ENCODE measurements at regions of chr3 and their contacts with region 1.

Region 1: DNA sequence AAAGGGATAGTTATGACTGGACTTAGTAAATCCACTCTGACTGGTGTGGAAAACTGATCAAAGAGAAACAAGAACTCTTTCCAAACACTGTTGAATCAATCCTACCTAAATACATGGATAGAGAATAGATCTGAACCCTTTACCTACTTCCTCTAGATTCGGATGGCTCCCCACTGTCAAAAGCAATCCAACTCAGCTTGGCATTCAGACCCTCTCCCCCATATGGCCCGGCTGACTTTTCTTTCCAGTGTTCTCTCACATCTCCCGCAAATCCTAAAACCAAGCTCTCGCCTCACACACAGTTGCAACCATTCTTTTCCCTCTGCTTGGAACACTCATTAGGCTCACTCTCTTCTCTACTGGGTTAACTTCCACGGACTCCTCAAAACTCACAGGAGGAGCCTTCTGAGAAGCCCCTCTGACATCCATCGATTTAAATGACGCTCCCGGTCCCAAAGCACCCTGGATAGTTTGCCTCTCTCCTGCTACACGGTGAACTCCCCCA is 639 bp downstream of the SPICE1 start:
- H3K4me3 Mint-ChIP-seq: no peak overlapping the region
- H3K27ac Mint-ChIP-seq: no peak overlapping the region
- H3K4me1 Mint-ChIP-seq: peaks cover 13% of the 10 kb centered on the region
- H3K27me3 Mint-ChIP-seq: peaks cover 8% of the 10 kb centered on the region

Region 2: GRCh38 chr3:113454057-113454456 is 60.3 kb before region 1 on chr3:
- intact Hi-C with region 1: no loop called
- H3K4me3 Mint-ChIP-seq: no peak overlapping the region
- H3K27ac Mint-ChIP-seq: peak overlapping the region; percentile 53
- H3K4me1 Mint-ChIP-seq: peaks cover 14% of the 10 kb centered on the region
- H3K27me3 Mint-ChIP-seq: no peaks in the 10 kb centered on the region

Region 3: GRCh38 chr3:113668015-113668414 is 153.7 kb after region 1 on chr3:
- intact Hi-C with region 1: no loop called
- H3K4me3 Mint-ChIP-seq: no peak overlapping the region
- H3K27ac Mint-ChIP-seq: no peak overlapping the region
- H3K4me1 Mint-ChIP-seq: peaks cover 21% of the 10 kb centered on the region
- H3K27me3 Mint-ChIP-seq: no peaks in the 10 kb centered on the region

Region 4: GRCh38 chr3:113696658-113697499 is 182.6 kb after region 1 on chr3:
- intact Hi-C with region 1: loop called (anchors 5 kb)
- H3K4me3 Mint-ChIP-seq: no peak overlapping the region
- H3K27ac Mint-ChIP-seq: no peak overlapping the region
- H3K4me1 Mint-ChIP-seq: peaks cover 33% of the 10 kb centered on the region
- H3K27me3 Mint-ChIP-seq: peaks cover 8% of the 10 kb centered on the region

Measured in dendritic cell treated with granulocyte-macrophage colony-stimulating factor and Interleukin-4, amounts not matched to agents 40 ng/mL and 50 ng/mL, for 4 days (primary cell).